ENCODE measurements at regions of chr12 and their contacts with region 1.

Region 1: DNA sequence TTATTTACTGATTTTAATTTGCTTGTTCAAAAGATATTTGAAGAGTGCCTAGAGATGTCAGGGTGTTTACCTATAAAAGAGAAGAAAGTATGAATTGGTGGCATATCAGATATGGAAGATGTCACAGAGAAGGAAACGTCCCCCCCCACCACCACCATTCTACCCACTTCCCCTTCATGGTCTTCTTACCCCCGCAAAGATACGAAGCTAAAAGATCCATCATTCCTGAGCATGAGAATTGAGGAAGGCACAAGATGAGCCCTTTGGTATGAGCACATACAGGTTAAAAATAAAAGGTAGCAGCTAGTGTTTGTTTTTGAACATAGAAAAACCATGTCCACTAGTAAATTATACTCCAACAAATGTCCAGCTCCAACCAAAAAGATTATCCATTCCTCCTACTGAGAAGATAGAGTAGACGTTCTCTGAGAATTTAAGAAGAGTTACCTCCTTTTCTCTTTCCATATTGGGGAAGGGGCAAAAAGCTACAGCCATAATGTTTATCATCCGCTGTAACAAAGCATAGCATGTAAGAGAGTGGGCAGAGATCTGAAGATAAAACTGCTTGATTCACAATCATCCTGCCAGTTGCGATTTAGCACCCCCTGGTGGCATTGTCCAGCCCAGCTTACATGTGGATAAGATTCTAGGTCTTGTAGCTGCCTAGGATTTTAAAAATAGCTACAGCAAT is 29.1 kb downstream of the NFYB start:
- DNase-seq: peak; percentile 69
- H3K4me3 ChIP-seq: no peak overlapping the region
- H3K27ac ChIP-seq: no peak overlapping the region
- H3K27me3 ChIP-seq: no peaks in the 10 kb centered on the region
- CTCF ChIP-seq: peak; percentile 97

Region 2: DNA sequence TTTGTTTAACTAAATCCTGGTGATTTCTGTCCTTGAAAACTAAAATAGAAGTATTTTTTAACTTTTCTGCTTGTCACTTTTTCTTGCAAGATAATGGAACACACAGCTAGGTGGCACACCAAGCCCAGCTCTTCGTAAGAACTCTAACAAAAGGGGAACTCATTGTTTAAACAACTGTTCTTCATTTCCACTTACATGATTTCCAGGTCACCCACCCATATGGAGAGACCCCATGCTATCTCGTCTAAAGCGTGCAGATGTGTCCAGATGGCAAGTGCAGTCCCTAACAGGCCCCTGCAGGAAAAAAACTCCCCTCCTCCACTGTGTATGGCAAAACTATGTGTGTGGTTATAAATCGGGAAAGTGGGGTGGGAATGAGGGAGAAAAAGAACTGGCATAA is 224.6 kb before region 1 on chr12:
- CTCF ChIA-PET with region 1: interaction called, 16 read pairs
- POLR2A ChIA-PET with region 1: no interaction called
- DNase-seq: peak; percentile 45
- H3K4me3 ChIP-seq: no peak overlapping the region
- H3K27ac ChIP-seq: no peak overlapping the region
- H3K27me3 ChIP-seq: no peaks in the 10 kb centered on the region
- CTCF ChIP-seq: peak; percentile 63

Region 3: GRCh38 chr12:103965590-103966504 is 143.1 kb before region 1 on chr12 and contains the start of gene TDG:
- CTCF ChIA-PET with region 1: interaction called, 33 read pairs
- POLR2A ChIA-PET with region 1: interaction called, 5 read pairs
- DNase-seq: peak; percentile 97
- H3K4me3 ChIP-seq: peak within 1 kb of the TSS; percentile 95
- H3K27ac ChIP-seq: peak within 1 kb of the TSS; percentile 88
- H3K27me3 ChIP-seq: no peaks in the 10 kb centered on the region
- CTCF ChIP-seq: peak; percentile 15; the same call in 1 of the 2 replicates
- polyA plus RNA-seq, gene TDG: 20.4 and 28.4 TPM in 2 replicates

Region 4: GRCh38 chr12:104057771-104058197 is 51.1 kb before region 1 on chr12:
- CTCF ChIA-PET with region 1: interaction called, 47 read pairs
- POLR2A ChIA-PET with region 1: no interaction called
- DNase-seq: no peak
- H3K4me3 ChIP-seq: no peak overlapping the region
- H3K27ac ChIP-seq: no peak overlapping the region
- H3K27me3 ChIP-seq: no peaks in the 10 kb centered on the region
- CTCF ChIP-seq: peak; percentile 73

Region 5: GRCh38 chr12:104083769-104084475 is 25.0 kb before region 1 on chr12:
- CTCF ChIA-PET with region 1: interaction called, 16 read pairs
- POLR2A ChIA-PET with region 1: interaction called, 3 read pairs
- DNase-seq: no peak
- H3K4me3 ChIP-seq: no peak overlapping the region
- H3K27ac ChIP-seq: no peak overlapping the region
- H3K27me3 ChIP-seq: no peaks in the 10 kb centered on the region
- CTCF ChIP-seq: no peak

Region 6: GRCh38 chr12:104097954-104098353 is 10.9 kb before region 1 on chr12:
- CTCF ChIA-PET with region 1: interaction called, 82 read pairs
- POLR2A ChIA-PET with region 1: no interaction called
- DNase-seq: no peak
- H3K4me3 ChIP-seq: no peak overlapping the region
- H3K27ac ChIP-seq: no peak overlapping the region
- H3K27me3 ChIP-seq: no peaks in the 10 kb centered on the region
- CTCF ChIP-seq: no peak

Region 7: DNA sequence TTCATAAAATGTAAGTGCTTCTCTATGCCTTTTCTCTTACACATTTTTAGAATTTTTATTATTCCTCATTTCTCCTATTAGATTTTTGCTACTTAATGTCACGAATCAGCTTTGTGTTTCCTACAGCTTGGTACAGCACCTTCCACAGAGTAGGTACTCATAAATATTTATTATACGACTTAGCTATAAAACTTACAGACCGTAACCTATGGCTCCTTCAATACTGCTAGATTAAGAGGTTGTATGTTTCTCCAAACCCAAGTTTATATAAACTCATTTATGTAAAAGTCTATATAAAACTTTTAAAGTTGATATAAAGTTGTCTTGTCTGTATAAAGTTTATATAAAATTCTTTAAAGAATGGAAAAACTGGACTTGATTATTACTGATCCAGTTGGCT is 17.6 kb after region 1 on chr12:
- CTCF ChIA-PET with region 1: interaction called, 34 read pairs
- POLR2A ChIA-PET with region 1: interaction called, 3 read pairs
- DNase-seq: no peak
- H3K4me3 ChIP-seq: no peak overlapping the region
- H3K27ac ChIP-seq: no peak overlapping the region
- H3K27me3 ChIP-seq: no peaks in the 10 kb centered on the region
- CTCF ChIP-seq: no peak

Region 8: GRCh38 chr12:104276273-104277131 is 167.6 kb after region 1 on chr12:
- CTCF ChIA-PET with region 1: no interaction called
- POLR2A ChIA-PET with region 1: no interaction called
- DNase-seq: no peak
- H3K4me3 ChIP-seq: no peak overlapping the region
- H3K27ac ChIP-seq: no peak overlapping the region
- H3K27me3 ChIP-seq: no peaks in the 10 kb centered on the region
- CTCF ChIP-seq: no peak

Region 9: GRCh38 chr12:104653730-104654664 is 545.1 kb after region 1 on chr12:
- CTCF ChIA-PET with region 1: no interaction called
- POLR2A ChIA-PET with region 1: no interaction called
- DNase-seq: no peak
- H3K4me3 ChIP-seq: no peak overlapping the region
- H3K27ac ChIP-seq: no peak overlapping the region
- H3K27me3 ChIP-seq: peaks cover 7% of the 10 kb centered on the region
- CTCF ChIP-seq: peak; percentile 40

Measured in AG04450 (cell line).